Panc1 (cell line): ENCODE measurements at regions of chr10 and their contacts with region 1.

Region 1: GRCh38 chr10:69327463-69328379 is 49.4 kb downstream of the HK1 start:
- DNase-seq: no peak
- ATAC-seq: peak; percentile 76
- H3K4me3 ChIP-seq: peak overlapping the region; percentile 28 to 60
- H3K27ac ChIP-seq: peak overlapping the region; percentile 91
- H3K4me1 ChIP-seq: peaks cover 42% of the 10 kb centered on the region
- H3K27me3 ChIP-seq: no peaks in the 10 kb centered on the region
- CTCF ChIP-seq: no peak

Region 2: GRCh38 chr10:69179743-69180524 is 147.8 kb before region 1 on chr10 and contains the start of gene SUPV3L1:
- CTCF ChIA-PET with region 1: no interaction called
- POLR2A ChIA-PET with region 1: no interaction called
- in situ Hi-C with region 1: no loop called
- intact Hi-C with region 1: no loop called
- DNase-seq: peak; percentile 98
- ATAC-seq: peak; percentile 97
- H3K4me3 ChIP-seq: peak within 1 kb of the TSS; percentile 94 to 95
- H3K27ac ChIP-seq: peak within 1 kb of the TSS; percentile 98
- H3K4me1 ChIP-seq: peaks cover 11% of the 10 kb centered on the region; the same call in 1 of the 2 replicates
- H3K27me3 ChIP-seq: no peaks in the 10 kb centered on the region
- CTCF ChIP-seq: no peak
- total RNA-seq, gene SUPV3L1: 65.0 TPM

Region 3: GRCh38 chr10:69315100-69315542 is 12.6 kb before region 1 on chr10:
- CTCF ChIA-PET with region 1: no interaction called
- POLR2A ChIA-PET with region 1: no interaction called
- in situ Hi-C with region 1: no loop called
- intact Hi-C with region 1: no loop called
- DNase-seq: no peak
- ATAC-seq: no peak
- H3K4me3 ChIP-seq: no peak overlapping the region
- H3K27ac ChIP-seq: no peak overlapping the region
- H3K4me1 ChIP-seq: peaks cover 11% of the 10 kb centered on the region
- H3K27me3 ChIP-seq: no peaks in the 10 kb centered on the region
- CTCF ChIP-seq: no peak

Region 4: DNA sequence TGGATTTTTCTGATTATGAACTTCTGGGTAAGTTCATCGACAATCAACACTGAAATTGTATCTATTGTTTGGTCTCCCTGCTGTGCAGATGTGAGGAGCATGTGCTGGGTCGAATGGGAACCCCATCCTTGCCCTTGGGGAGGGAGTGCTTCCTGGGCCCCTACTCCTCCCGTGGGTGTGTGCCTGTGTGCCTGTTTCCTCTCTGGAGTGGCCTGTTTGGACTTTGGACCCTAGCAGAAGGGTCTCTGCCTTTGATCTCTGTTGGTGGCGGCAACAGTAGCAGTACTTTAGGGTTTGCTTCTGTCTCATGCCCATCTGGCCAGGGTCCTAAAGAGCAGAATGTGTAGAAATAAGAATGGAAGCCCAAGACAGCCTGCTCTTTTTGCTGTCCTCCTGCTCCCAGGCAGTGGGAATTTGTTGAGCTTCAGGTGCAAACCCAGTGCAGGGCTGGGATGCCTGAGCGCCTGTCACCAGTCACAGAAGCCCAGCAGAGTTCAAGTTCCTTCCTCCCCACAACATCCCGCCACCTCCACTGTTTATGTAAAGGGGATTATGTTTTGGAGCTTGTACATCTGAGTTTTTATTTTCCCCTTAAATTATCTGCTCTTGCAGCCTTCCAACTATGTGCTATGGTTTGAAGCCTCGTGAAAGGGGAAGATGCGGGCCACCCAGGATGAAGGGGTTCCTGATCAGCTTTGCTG is 90.5 kb after region 1 on chr10:
- CTCF ChIA-PET with region 1: no interaction called
- POLR2A ChIA-PET with region 1: interaction called, 16 read pairs
- in situ Hi-C with region 1: no loop called
- intact Hi-C with region 1: no loop called
- DNase-seq: no peak
- ATAC-seq: no peak
- H3K4me3 ChIP-seq: no peak overlapping the region
- H3K27ac ChIP-seq: no peak overlapping the region
- H3K4me1 ChIP-seq: no peaks in the 10 kb centered on the region
- H3K27me3 ChIP-seq: no peaks in the 10 kb centered on the region
- CTCF ChIP-seq: no peak